PC-9 (cell line): ENCODE measurements at regions of chr3 and their contacts with region 1.

Region 1: GRCh38 chr3:8851719-8852118 is 82.3 kb upstream of the OXTR start:
- DNase-seq: peak in 1 of 2 experiments; percentile 67
- H3K4me3 ChIP-seq: no peak overlapping the region
- H3K27ac ChIP-seq: no peak overlapping the region
- H3K4me1 ChIP-seq: no peaks in the 10 kb centered on the region
- H3K27me3 ChIP-seq: no peaks in the 10 kb centered on the region
- CTCF ChIP-seq: no peak

Region 2: GRCh38 chr3:8840556-8840955 is 11.2 kb before region 1 on chr3:
- CTCF ChIA-PET with region 1: no interaction called
- POLR2A ChIA-PET with region 1: interaction called, 6 read pairs
- intact Hi-C with region 1: loop called (anchors 1 kb)
- DNase-seq: peak in 1 of 2 experiments; percentile 39
- H3K4me3 ChIP-seq: no peak overlapping the region
- H3K27ac ChIP-seq: no peak overlapping the region
- H3K4me1 ChIP-seq: no peaks in the 10 kb centered on the region; the same call in 1 of the 2 replicates
- H3K27me3 ChIP-seq: no peaks in the 10 kb centered on the region
- CTCF ChIP-seq: no peak

Region 3: DNA sequence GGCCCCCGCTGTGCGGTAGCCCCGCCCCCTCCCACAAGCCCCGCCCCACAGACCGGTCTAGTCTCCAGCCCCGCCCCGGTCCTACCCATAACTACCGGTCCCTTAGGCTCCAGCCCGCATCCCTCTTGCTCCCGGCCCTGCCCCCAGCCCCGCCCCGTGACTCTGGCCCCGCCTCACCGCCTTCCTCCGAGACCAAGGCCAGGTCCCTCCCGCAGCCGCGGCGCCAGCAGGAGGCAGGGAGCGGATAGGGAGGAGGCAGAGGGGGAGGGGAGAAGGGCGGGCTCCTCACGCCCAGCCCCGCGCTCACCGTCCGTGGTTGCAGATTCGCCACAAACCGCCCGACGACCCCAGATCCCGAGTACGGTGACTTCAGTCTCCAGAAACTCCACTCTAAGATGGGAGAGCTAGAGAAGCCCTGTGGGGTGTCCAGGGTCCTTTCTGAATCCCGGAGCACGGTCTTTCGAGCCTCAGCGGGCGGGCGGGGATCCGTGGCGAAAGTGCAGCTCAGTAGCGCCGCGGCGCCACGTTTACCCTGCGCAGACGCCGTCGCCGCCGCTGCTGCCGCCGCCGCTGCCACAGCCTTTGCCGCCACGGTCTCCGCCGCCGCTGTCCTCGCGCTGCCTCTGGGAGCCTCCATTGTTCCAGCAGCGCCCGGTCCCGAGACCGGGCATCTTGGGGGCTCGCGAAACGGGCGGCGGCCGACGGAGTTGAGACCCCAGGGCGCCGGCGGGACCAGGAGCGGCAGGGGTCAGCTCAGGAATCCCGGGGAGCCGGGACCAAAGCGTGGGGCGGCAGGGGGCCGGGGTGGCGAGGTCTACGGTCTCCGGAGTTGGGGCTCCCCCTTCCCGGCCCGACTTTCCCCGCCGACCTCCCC is 879.7 kb after region 1 on chr3 and contains the start of gene BRPF1:
- CTCF ChIA-PET with region 1: no interaction called
- POLR2A ChIA-PET with region 1: interaction called, 13 read pairs
- intact Hi-C with region 1: no loop called
- DNase-seq: peak; percentile 91 to 98
- H3K4me3 ChIP-seq: peak within 1 kb of the TSS; percentile 95
- H3K27ac ChIP-seq: peak within 1 kb of the TSS; percentile 73
- H3K4me1 ChIP-seq: peaks cover 19% of the 10 kb centered on the region
- H3K27me3 ChIP-seq: no peaks in the 10 kb centered on the region
- CTCF ChIP-seq: 0 out of 2 replicates have a peak, but pooled peaks have one; percentile 13
- total RNA-seq, gene BRPF1: 15.9 and 18.3 TPM in 2 replicates